Dendritic cell treated with granulocyte-macrophage colony-stimulating factor and Interleukin-4, amounts not matched to agents 40 ng/mL and 50 ng/mL, for 4 days (primary cell): ENCODE measurements at regions of chr9 and their contacts with region 1.

Region 1: GRCh38 chr9:33737811-33738606 is 57.4 kb upstream of the PRSS3 start:
- H3K4me3 Mint-ChIP-seq: no peak overlapping the region
- H3K27ac Mint-ChIP-seq: no peak overlapping the region
- H3K4me1 Mint-ChIP-seq: peaks cover 5% of the 10 kb centered on the region
- H3K27me3 Mint-ChIP-seq: peaks cover 20% of the 10 kb centered on the region

Region 2: DNA sequence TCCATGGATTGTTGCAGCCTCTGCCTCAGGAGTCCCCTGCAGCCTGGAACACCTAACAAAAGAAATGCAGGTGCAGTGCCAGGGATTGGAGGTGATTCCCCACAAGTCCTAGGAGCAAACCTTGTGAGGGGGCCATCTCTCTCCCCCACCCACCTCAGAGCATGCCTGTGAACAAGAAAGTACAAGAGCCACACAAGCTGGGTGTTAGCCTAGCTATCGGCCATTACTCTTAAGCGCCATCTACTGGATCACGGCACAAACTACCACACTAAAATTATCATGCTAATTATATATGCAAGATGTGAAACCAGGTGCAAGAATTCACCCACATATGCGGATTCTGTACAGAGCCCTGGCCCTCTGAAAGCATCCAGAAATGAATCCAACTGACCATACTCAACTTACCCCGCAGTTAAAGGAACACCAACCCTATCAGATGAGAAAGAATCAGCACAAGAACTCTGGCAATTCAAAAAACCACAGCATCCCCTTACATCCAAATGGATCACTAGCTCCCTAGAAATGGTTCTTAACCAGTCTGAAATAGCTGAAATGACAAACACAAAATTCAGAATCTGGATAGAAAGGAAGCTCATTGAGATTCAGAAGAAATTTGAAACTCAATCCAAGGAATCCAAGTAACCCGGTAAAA is 40.8 kb after region 1 on chr9:
- intact Hi-C with region 1: loop called (anchors 2 kb)
- H3K4me3 Mint-ChIP-seq: no peak overlapping the region
- H3K27ac Mint-ChIP-seq: no peak overlapping the region
- H3K4me1 Mint-ChIP-seq: peaks cover 5% of the 10 kb centered on the region
- H3K27me3 Mint-ChIP-seq: peaks cover 4% of the 10 kb centered on the region